ENCODE measurements at regions of chr20 and their contacts with region 1.

Region 1: GRCh38 chr20:32858701-32859372 is at the start of gene EFCAB8:
- DNase-seq: peak; percentile 33 to 45 (median 38)
- ATAC-seq: peak; percentile 82
- H3K4me3 ChIP-seq: no peak within 1 kb of the TSS
- H3K27ac ChIP-seq: no peak within 1 kb of the TSS
- H3K4me1 ChIP-seq: peaks cover 0 to 2% of the 10 kb centered on the region in 2 experiments; a peak in 2 of 5 replicates
- H3K27me3 ChIP-seq: no peaks in the 10 kb centered on the region
- CTCF ChIP-seq: peak; percentile 21 to 34 (median 22); a peak in 3 of 6 replicates
- EP300 ChIP-seq: no peak
- POLR2A ChIP-seq: no peak
- RAD21 ChIP-seq: no peak
- polyA plus RNA-seq, gene EFCAB8: not detected

Region 2: GRCh38 chr20:32807706-32808105 is 51.1 kb before region 1 on chr20:
- CTCF ChIA-PET with region 1: no interaction called
- POLR2A ChIA-PET with region 1: no interaction called
- in situ Hi-C with region 1: no loop called
- intact Hi-C with region 1: loop called (anchors 10 kb)
- DNase-seq: no peak
- ATAC-seq: no peak
- H3K4me3 ChIP-seq: no peak overlapping the region
- H3K27ac ChIP-seq: no peak overlapping the region
- H3K4me1 ChIP-seq: no peaks in the 10 kb centered on the region
- H3K27me3 ChIP-seq: no peaks in the 10 kb centered on the region
- CTCF ChIP-seq: no peak
- EP300 ChIP-seq: no peak
- POLR2A ChIP-seq: no peak
- RAD21 ChIP-seq: no peak